PC-9 (cell line): ENCODE measurements at regions of chr6 and their contacts with region 1.

Region 1: DNA sequence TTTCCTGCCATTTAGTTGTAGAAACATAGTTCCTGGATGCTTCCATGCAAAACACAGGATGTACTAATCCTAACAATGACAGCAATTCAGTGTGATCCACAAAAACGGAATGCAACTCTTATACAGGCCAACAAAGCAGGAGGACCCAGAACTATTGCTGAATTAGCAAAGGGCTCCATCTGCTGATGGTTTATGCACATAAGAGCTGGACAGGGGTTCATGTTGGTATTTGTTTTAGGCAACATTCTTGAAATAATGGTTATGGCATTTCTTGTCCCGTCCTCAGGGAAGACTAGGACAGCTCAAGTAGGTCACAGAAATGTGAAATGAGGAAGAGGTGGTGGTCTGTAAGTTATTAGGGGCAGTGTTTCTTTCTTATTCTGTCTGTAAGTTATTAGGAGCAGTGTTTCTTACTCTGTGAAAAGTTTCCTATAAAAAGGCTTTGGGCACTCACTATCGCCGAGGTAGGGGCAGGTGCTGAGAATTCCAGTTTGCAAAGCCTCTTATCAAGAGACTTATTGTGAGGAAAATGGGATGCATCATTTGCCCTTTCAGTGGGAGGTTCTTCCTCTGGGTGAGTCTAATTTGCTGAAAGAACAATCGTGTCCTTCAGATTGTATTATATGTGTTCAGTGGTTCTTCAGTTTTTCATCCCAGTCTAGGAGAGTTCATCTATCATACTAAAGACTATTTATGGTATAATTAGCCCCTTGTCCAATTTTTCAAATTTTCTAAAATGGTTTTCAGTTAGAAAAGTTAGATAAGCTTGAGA is 171.1 kb downstream of the MCHR2 start:
- DNase-seq: peak; percentile 25 to 56
- H3K4me3 ChIP-seq: peak overlapping the region; percentile 48; the same call in 1 of the 2 replicates
- H3K27ac ChIP-seq: no peak overlapping the region
- H3K4me1 ChIP-seq: 0 out of 2 replicates have a peak, but pooled peaks cover 5% of the 10 kb centered on the region
- H3K27me3 ChIP-seq: no peaks in the 10 kb centered on the region
- CTCF ChIP-seq: peak; percentile 68

Region 2: DNA sequence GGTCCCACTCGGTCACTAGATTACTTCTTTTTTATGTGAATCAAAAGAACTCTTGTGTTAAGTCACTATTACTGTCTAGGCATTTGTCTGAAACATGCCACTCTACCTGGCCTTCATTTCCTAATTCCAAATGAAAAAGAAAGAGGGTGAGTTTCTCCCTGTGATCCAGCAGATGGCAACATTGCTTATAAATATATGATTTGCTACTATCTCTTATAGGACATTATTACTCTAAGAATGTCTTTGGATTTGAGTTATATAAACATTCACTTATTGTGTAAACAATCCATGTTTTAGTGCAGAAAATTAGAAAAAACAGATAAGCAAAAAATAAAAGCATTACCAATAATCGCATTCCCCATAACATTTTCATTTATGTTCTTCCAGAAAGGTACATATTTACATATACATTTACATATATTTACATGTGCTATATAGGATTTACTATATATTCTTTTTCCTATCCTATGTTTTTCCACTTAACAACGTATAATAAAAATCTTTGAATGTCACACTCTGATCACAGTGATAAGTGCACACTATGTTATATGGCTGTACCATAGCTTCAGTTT is 540.4 kb before region 1 on chr6:
- CTCF ChIA-PET with region 1: no interaction called
- POLR2A ChIA-PET with region 1: no interaction called
- intact Hi-C with region 1: loop called (anchors 5 kb)
- DNase-seq: peak in 1 of 2 experiments; percentile 42
- H3K4me3 ChIP-seq: no peak overlapping the region
- H3K27ac ChIP-seq: no peak overlapping the region
- H3K4me1 ChIP-seq: no peaks in the 10 kb centered on the region
- H3K27me3 ChIP-seq: no peaks in the 10 kb centered on the region
- CTCF ChIP-seq: peak; percentile 72

Region 3: DNA sequence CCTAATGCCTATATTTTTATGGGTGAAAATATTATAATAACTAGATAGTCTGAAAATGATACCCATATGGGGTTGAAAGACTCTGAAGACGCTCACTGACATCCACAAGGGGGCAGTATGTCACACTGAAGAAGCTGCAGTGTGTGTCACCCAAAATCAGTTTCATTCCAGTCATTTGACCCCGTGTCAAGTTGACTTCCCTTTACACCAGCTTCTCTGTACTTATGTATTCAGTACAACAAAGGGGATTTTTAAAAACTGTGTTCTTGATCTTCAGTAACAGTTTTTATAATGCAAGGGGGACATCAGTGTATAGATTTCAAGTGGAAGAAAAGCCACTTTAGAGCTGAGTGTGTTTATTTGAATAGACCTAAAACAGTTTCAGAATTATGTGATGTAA is 492.8 kb before region 1 on chr6:
- CTCF ChIA-PET with region 1: no interaction called
- POLR2A ChIA-PET with region 1: no interaction called
- intact Hi-C with region 1: loop called (anchors 5 kb)
- DNase-seq: peak; percentile 31 to 59
- H3K4me3 ChIP-seq: no peak overlapping the region
- H3K27ac ChIP-seq: no peak overlapping the region
- H3K4me1 ChIP-seq: no peaks in the 10 kb centered on the region
- H3K27me3 ChIP-seq: no peaks in the 10 kb centered on the region
- CTCF ChIP-seq: peak; percentile 89

Region 4: GRCh38 chr6:99467509-99468106 is 355.3 kb before region 1 on chr6:
- CTCF ChIA-PET with region 1: interaction called, 6 read pairs
- POLR2A ChIA-PET with region 1: no interaction called
- intact Hi-C with region 1: loop called (anchors 5 kb)
- DNase-seq: no peak
- H3K4me3 ChIP-seq: no peak overlapping the region
- H3K27ac ChIP-seq: no peak overlapping the region
- H3K4me1 ChIP-seq: no peaks in the 10 kb centered on the region
- H3K27me3 ChIP-seq: no peaks in the 10 kb centered on the region
- CTCF ChIP-seq: peak; percentile 80

Region 5: DNA sequence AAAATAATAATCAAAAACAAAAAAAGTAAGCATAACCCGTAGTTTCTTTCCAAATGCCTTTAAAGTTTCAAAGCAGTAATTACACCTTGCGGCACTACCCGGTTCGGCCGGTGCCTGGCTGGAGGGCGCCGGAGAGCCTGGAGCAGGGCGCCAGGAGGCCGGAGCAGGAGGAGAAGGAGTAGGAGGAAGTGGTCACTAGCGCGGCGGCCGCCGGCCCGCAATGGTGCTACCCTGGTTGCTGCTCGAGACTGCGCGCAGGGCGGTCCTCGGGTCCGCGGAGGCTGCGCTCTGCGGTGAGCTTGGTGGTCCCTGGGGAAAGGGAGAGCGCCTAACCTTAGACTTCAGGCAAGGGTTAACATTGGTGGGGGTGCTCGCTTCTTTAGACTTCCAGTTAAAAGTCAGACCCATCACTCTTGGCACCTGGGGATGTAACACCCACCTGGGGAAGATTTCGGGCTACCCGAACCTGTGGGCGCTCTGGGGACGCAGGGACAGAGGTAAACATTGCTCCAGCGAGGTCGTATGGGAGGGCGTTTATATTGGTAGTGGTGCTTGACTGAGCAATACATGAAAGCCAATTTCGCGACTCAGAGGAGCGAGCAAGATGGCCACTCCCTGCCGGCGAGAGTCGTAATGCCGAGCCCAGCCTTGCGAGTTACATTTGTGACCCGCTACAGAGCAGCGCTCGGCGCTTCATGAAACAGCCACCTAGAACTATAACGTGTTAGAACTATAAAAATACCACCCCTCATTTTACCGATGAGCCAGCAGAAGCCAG is 301.9 kb before region 1 on chr6:
- CTCF ChIA-PET with region 1: interaction called, 19 read pairs
- POLR2A ChIA-PET with region 1: no interaction called
- intact Hi-C with region 1: no loop called
- DNase-seq: peak; percentile 73 to 82
- H3K4me3 ChIP-seq: peak overlapping the region; percentile 61
- H3K27ac ChIP-seq: peak overlapping the region; percentile 45
- H3K4me1 ChIP-seq: peaks cover 12% of the 10 kb centered on the region
- H3K27me3 ChIP-seq: no peaks in the 10 kb centered on the region
- CTCF ChIP-seq: peak; percentile 85

Region 6: DNA sequence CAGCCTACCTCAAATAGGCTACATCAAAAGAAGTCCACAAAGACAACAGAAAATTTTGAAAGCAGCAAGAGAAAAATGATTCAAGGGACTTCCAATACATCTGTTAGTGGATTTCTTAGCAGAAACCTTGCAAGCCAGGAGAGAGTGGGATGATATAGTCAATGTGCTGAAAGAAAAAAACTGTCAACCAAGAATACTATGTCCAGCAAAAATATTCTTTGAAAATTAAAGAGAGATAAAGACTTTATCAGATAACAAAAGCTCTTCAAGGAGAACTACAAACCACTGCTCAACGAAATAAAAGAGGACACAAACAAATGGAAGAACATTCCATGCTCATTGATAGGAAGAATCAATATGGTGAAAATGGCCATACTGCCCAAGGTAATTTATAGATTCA is 137.1 kb after region 1 on chr6:
- CTCF ChIA-PET with region 1: no interaction called
- POLR2A ChIA-PET with region 1: no interaction called
- intact Hi-C with region 1: no loop called
- DNase-seq: no peak
- H3K4me3 ChIP-seq: no peak overlapping the region
- H3K27ac ChIP-seq: no peak overlapping the region
- H3K4me1 ChIP-seq: no peaks in the 10 kb centered on the region
- H3K27me3 ChIP-seq: no peaks in the 10 kb centered on the region
- CTCF ChIP-seq: no peak